ENCODE measurements at regions of chr15 and their contacts with region 1.

Region 1: DNA sequence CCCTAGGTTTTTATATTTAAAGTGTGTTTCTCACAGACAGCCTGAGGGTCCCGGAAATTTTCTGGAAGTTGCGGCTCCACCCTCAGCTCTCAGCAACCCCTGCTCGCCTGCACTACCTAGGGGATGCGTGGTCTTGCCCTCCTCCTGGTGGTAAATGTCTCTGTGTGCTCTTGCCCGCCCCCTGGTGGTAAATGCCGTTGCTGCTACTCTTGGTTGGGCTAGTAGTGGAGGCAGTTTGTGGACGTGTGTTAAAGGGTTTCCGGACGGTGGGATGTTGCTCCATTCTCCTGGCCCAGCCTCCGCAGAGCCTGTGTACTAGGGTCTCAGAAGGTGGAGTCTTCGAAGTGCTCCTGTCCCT is 27.4 kb downstream of the STOML1 start:
- DNase-seq: peak; percentile 74 to 89 (median 83)
- ATAC-seq: peak; percentile 95
- H3K4me3 ChIP-seq: peak overlapping the region; percentile 75
- H3K4me3 Mint-ChIP-seq: peak overlapping the region; percentile 75 to 90 (median 84)
- H3K27ac ChIP-seq: peak overlapping the region; percentile 33
- H3K27ac Mint-ChIP-seq: peak overlapping the region; percentile 46 to 94 (median 88)
- H3K4me1 ChIP-seq: peaks cover 15 to 25% of the 10 kb centered on the region in 2 donors
- H3K4me1 Mint-ChIP-seq: peaks cover 23 to 52% (median 45%) of the 10 kb centered on the region in 7 donors
- H3K27me3 ChIP-seq: no peaks in the 10 kb centered on the region
- H3K27me3 Mint-ChIP-seq: peaks cover 0 to 4% (median 0%) of the 10 kb centered on the region in 5 donors

Region 2: DNA sequence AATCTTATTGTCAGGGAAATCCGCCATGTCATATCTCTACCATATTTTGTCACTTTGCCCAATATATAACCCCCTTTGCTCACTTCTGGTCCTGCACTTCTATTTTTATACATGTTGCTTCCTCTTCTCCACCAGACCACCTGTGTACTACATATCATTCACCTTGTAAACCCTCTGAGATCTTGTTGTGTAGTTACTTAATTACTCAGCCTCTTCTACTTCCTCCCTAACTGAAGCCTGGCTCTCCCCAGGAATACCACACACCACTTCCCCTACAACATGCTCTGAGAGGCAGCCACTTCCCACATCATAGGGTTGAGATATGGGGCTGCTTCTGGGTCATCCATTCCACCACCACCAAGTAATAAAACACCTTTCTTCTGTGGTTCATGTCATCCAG is 1598.9 kb before region 1 on chr15:
- CTCF ChIA-PET with region 1: no interaction called
- POLR2A ChIA-PET with region 1: no interaction called
- intact Hi-C with region 1: no loop called
- DNase-seq: peak in 5 of 9 donors; percentile 11 to 39 (median 27)
- ATAC-seq: peak; percentile 81
- H3K4me3 ChIP-seq: no peak overlapping the region
- H3K4me3 Mint-ChIP-seq: peak overlapping the region in 9 of 10 donors; percentile 1 to 58 (median 18)
- H3K27ac ChIP-seq: no peak overlapping the region
- H3K27ac Mint-ChIP-seq: peak overlapping the region in 4 of 9 donors; percentile 6 to 44 (median 10)
- H3K4me1 ChIP-seq: peaks cover 0 to 18% of the 10 kb centered on the region in 2 donors
- H3K4me1 Mint-ChIP-seq: peaks cover 27 to 59% (median 46%) of the 10 kb centered on the region in 7 donors
- H3K27me3 ChIP-seq: no peaks in the 10 kb centered on the region
- H3K27me3 Mint-ChIP-seq: no peaks in the 10 kb centered on the region

Region 3: DNA sequence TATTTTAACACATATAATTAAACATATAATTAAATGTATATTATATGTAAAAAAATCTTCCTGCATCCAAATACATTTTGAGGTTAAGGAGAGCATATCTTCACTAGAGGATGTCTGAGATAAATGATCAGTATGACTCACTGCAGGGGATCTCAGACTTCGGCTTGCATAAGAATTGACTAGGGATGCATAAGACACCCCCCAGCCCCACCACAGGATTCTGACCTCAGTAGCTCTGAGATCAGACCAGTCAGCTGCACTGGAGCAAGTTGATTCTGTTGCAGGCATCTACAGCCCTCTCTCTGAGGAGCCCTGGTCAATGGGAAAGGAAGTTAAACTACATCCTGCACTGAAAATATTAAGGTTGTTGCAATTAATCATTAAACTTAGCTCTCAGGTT is 120.4 kb before region 1 on chr15:
- CTCF ChIA-PET with region 1: no interaction called
- POLR2A ChIA-PET with region 1: no interaction called
- intact Hi-C with region 1: no loop called
- DNase-seq: no peak
- ATAC-seq: no peak
- H3K4me3 ChIP-seq: no peak overlapping the region
- H3K4me3 Mint-ChIP-seq: no peak overlapping the region
- H3K27ac ChIP-seq: no peak overlapping the region
- H3K27ac Mint-ChIP-seq: no peak overlapping the region
- H3K4me1 ChIP-seq: no peaks in the 10 kb centered on the region
- H3K4me1 Mint-ChIP-seq: peaks cover 0 to 2% (median 0%) of the 10 kb centered on the region in 7 donors
- H3K27me3 ChIP-seq: no peaks in the 10 kb centered on the region
- H3K27me3 Mint-ChIP-seq: peaks cover 8 to 38% (median 18%) of the 10 kb centered on the region in 5 donors

Region 4: DNA sequence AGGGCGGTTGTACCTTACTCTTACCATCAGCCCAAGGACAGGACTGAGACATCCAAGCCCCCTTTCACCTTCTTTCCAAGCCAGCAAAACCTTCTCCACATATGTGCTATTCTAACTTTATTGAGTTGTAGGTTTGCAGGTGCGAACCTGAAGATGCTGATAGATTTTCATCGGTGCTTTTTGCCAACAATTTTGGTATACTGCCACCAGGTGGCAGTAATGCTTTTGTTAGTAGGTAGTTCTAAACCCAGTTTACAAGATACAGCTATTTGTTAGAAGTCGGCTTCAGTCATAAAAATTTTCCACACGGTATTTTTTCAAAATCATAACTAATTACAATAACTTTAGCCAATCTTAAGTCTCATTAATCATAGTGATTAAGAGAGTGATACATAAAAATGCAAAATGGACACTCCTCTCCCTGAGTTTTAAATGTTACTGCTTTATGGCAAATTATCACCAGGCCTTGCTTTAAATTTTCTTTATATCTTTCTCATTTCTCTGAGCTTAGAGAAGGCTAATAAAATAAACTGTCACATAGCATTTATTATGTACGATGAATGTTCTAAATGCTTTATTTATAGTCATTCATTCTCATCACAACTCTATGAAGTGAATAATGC is 90.7 kb before region 1 on chr15:
- CTCF ChIA-PET with region 1: no interaction called
- POLR2A ChIA-PET with region 1: no interaction called
- intact Hi-C with region 1: loop called in 1 of 2 experiments (anchors 1 kb)
- DNase-seq: peak in 7 of 9 donors; percentile 6 to 52 (median 36)
- ATAC-seq: peak; percentile 48
- H3K4me3 ChIP-seq: no peak overlapping the region
- H3K4me3 Mint-ChIP-seq: no peak overlapping the region
- H3K27ac ChIP-seq: no peak overlapping the region
- H3K27ac Mint-ChIP-seq: no peak overlapping the region
- H3K4me1 ChIP-seq: no peaks in the 10 kb centered on the region
- H3K4me1 Mint-ChIP-seq: peaks cover 0 to 3% (median 0%) of the 10 kb centered on the region in 7 donors
- H3K27me3 ChIP-seq: no peaks in the 10 kb centered on the region
- H3K27me3 Mint-ChIP-seq: peaks cover 20 to 59% (median 49%) of the 10 kb centered on the region in 5 donors

Region 5: GRCh38 chr15:73897441-73898261 is 67.1 kb before region 1 on chr15:
- CTCF ChIA-PET with region 1: interaction called, 6 read pairs
- POLR2A ChIA-PET with region 1: no interaction called
- intact Hi-C with region 1: loop called in 1 of 2 experiments (anchors 2 kb)
- DNase-seq: peak in 7 of 9 donors; percentile 13 to 68 (median 27)
- ATAC-seq: peak; percentile 91
- H3K4me3 ChIP-seq: no peak overlapping the region
- H3K4me3 Mint-ChIP-seq: no peak overlapping the region
- H3K27ac ChIP-seq: no peak overlapping the region
- H3K27ac Mint-ChIP-seq: no peak overlapping the region
- H3K4me1 ChIP-seq: no peaks in the 10 kb centered on the region
- H3K4me1 Mint-ChIP-seq: peaks cover 0 to 5% (median 0%) of the 10 kb centered on the region in 7 donors
- H3K27me3 ChIP-seq: no peaks in the 10 kb centered on the region
- H3K27me3 Mint-ChIP-seq: peaks cover 0 to 3% (median 0%) of the 10 kb centered on the region in 5 donors

Region 6: DNA sequence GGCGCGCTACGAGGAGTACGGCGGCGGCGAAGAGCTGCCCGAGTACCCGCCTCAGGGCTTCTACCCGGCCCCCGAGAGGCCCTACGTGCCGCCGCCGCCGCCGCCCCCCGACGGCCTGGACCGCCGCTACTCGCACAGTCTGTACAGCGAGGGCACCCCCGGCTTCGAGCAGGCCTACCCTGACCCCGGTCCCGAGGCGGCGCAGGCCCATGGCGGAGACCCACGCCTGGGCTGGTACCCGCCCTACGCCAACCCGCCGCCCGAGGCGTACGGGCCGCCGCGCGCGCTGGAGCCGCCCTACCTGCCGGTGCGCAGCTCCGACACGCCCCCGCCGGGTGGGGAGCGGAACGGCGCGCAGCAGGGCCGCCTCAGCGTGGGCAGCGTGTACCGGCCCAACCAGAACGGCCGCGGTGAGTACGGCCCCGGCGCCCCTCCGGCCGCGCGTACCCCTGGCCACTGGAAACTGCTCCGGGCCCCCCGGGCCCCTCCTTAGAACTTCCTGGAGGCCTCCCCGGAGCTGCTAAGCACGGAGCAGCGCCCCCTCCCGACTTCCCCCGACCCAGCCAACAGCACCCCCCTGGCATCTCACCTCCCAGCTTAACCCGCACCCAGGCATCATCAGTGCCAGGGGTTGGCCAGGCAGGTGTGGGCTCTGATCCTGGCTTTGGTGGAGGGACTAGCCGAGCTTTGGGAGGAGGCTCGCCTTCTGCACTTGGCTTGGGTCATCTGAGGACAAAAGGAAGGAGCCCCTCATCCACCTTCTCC is 37.1 kb before region 1 on chr15:
- CTCF ChIA-PET with region 1: interaction called, 4 read pairs
- POLR2A ChIA-PET with region 1: interaction called, 6 read pairs
- intact Hi-C with region 1: loop called in 1 of 2 experiments (anchors 5 kb)
- DNase-seq: peak; percentile 69 to 86 (median 84)
- ATAC-seq: peak; percentile 93
- H3K4me3 ChIP-seq: peak overlapping the region; percentile 74
- H3K4me3 Mint-ChIP-seq: peak overlapping the region; percentile 62 to 83 (median 74)
- H3K27ac ChIP-seq: peak overlapping the region; percentile 77
- H3K27ac Mint-ChIP-seq: peak overlapping the region; percentile 26 to 69 (median 51)
- H3K4me1 ChIP-seq: peaks cover 15 to 21% of the 10 kb centered on the region in 2 donors
- H3K4me1 Mint-ChIP-seq: peaks cover 25 to 55% (median 39%) of the 10 kb centered on the region in 7 donors
- H3K27me3 ChIP-seq: no peaks in the 10 kb centered on the region
- H3K27me3 Mint-ChIP-seq: peaks cover 0 to 6% (median 0%) of the 10 kb centered on the region in 5 donors

Region 7: DNA sequence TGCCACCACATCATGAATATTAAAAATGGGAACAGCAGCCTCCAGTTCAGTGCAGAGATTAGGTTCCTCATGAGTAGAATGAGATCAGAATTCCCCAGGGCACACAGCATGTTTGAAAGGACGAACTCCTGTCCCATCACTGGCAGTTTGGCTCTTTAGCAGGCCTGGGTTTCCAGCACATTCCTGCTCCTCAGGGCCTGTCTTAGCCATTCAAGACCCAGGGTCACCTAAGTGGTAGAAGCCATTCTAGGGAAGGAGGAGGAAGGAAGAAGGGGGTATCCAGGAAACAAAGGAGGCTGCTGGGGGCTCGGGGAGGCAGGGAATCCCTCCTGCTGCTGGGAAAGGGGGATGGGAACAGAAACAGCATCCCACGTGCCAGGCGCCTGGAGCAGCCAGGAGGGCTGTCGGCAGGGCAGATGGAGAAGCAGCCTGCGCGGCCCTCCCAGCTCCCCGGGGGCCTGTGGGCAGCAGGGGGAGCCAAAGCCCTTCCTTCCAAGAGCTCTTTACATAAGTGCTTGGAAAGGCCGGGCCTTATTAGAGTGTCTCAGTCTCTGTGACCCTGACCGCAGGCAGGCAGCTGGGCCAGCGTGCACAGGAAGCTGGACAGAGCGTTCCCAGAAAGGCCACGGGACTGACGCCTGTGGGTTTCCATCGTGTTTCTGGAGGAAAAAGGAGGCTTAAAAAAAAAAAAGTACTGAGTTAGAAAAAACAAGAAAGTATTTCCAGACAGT is 13.7 kb before region 1 on chr15:
- CTCF ChIA-PET with region 1: interaction called, 68 read pairs
- POLR2A ChIA-PET with region 1: interaction called, 25 read pairs
- intact Hi-C with region 1: loop called (anchors 1 kb)
- DNase-seq: peak; percentile 53 to 76 (median 71)
- ATAC-seq: peak; percentile 89
- H3K4me3 ChIP-seq: no peak overlapping the region
- H3K4me3 Mint-ChIP-seq: peak overlapping the region in 1 of 10 donors; percentile 23
- H3K27ac ChIP-seq: no peak overlapping the region
- H3K27ac Mint-ChIP-seq: peak overlapping the region; percentile 10 to 97 (median 83)
- H3K4me1 ChIP-seq: peaks cover 0 to 6% of the 10 kb centered on the region in 2 donors
- H3K4me1 Mint-ChIP-seq: peaks cover 4 to 9% (median 7%) of the 10 kb centered on the region in 7 donors
- H3K27me3 ChIP-seq: no peaks in the 10 kb centered on the region
- H3K27me3 Mint-ChIP-seq: peaks cover 0 to 3% (median 0%) of the 10 kb centered on the region in 5 donors

Region 8: GRCh38 chr15:74158855-74159650 is 194.3 kb after region 1 on chr15:
- CTCF ChIA-PET with region 1: no interaction called
- POLR2A ChIA-PET with region 1: no interaction called
- intact Hi-C with region 1: no loop called
- DNase-seq: no peak
- ATAC-seq: no peak
- H3K4me3 ChIP-seq: no peak overlapping the region
- H3K4me3 Mint-ChIP-seq: no peak overlapping the region
- H3K27ac ChIP-seq: no peak overlapping the region
- H3K27ac Mint-ChIP-seq: no peak overlapping the region
- H3K4me1 ChIP-seq: no peaks in the 10 kb centered on the region
- H3K4me1 Mint-ChIP-seq: peaks cover 0 to 28% (median 9%) of the 10 kb centered on the region in 7 donors
- H3K27me3 ChIP-seq: no peaks in the 10 kb centered on the region
- H3K27me3 Mint-ChIP-seq: peaks cover 11 to 40% (median 19%) of the 10 kb centered on the region in 5 donors

Measured in naive thymus-derived CD4-positive, alpha-beta T cell (primary cell).